OCI-LY7 (cell line): ENCODE measurements at regions of chr12 and their contacts with region 1.

Region 1: DNA sequence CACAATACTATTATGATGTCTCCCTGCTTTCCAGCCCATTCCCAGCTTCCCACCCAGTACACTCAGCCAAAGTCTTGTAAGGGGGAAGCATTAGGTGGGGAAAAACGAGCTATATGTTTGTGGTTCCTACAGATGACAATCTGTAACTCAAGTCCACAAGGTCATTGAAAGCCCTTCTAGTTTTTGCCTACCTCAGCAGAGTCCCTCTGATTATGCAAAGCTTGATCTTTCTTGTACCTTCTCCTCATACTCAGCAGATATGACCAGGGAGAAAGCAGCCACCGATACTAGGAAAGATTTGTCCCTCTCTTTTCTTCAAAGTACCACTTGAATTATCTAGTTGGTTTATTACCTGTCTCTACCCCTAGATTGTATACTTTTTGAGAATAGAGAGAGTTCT is 10.6 kb downstream of the CMAS start:
- DNase-seq: no peak
- H3K4me3 ChIP-seq: no peak overlapping the region
- H3K27ac ChIP-seq: no peak overlapping the region
- H3K4me1 ChIP-seq: no peaks in the 10 kb centered on the region
- CTCF ChIP-seq: no peak

Region 2: GRCh38 chr12:22046090-22046967 is 10.3 kb before region 1 on chr12 and contains the start of gene CMAS:
- CTCF ChIA-PET with region 1: interaction called, 6 read pairs
- POLR2A ChIA-PET with region 1: interaction called, 10 read pairs
- intact Hi-C with region 1: no loop called
- DNase-seq: peak; percentile 78
- H3K4me3 ChIP-seq: peak within 1 kb of the TSS; percentile 98
- H3K27ac ChIP-seq: peak within 1 kb of the TSS; percentile 52
- H3K4me1 ChIP-seq: peaks cover 4% of the 10 kb centered on the region
- CTCF ChIP-seq: no peak
- total RNA-seq, gene CMAS: 19.9 and 22.2 TPM in 2 replicates

Region 3: DNA sequence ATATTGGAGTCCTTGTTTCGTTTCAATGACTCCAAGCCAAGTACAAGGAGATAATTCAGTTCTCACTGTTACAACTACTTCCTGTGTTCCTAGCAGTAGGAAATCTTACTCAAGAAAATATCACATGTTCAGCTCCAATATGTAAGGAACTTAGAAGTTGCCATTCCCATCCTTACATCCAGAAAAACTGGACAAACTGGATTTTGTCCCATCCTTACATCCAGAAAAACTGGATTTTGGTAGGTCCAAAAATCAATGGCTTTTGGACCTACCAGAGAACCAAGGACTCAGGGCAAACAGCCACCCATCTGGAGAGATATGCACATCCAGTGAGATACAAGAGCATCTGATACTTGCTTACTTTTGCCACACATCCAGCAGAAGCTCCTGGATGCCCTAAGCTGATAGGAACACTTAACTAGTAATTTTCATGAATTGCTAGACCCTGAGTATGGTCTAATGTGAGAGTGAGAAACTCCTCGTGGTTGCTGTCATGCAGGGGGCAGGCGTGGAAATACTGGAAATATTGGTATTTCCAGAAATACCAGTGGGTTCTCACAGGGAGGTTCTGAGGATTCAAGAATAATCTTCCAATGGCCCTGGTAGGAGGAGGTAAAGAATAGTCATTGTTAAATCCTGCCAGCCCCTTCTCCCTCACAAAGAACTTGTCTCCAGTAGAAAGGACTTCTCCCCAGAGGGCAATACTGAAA is 13.4 kb after region 1 on chr12:
- CTCF ChIA-PET with region 1: no interaction called
- POLR2A ChIA-PET with region 1: interaction called, 10 read pairs
- intact Hi-C with region 1: no loop called
- DNase-seq: no peak
- H3K4me3 ChIP-seq: no peak overlapping the region
- H3K27ac ChIP-seq: no peak overlapping the region
- H3K4me1 ChIP-seq: no peaks in the 10 kb centered on the region
- CTCF ChIP-seq: no peak

Region 4: DNA sequence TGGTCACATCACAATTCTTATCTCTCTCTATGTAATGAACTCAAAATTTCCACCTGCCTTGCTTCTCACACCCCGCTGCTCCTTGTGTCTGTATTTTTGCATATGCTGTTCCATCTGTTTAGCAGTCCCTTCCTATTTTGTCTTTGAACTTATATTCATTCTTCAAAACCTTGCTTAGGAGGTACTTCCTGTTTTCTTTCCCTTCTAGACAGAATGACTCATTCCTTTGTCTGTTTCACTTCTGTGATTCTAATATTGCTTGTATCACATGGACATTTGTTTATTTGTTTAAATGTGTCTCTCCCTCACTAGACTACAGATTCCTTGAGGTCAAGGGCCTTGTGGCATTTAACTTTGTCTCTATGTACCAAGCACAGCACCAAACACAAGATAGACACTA is 992.6 kb after region 1 on chr12:
- CTCF ChIA-PET with region 1: no interaction called
- POLR2A ChIA-PET with region 1: no interaction called
- intact Hi-C with region 1: no loop called
- DNase-seq: peak; percentile 12
- H3K4me3 ChIP-seq: no peak overlapping the region
- H3K27ac ChIP-seq: no peak overlapping the region
- H3K4me1 ChIP-seq: peaks cover 7% of the 10 kb centered on the region
- CTCF ChIP-seq: no peak